ENCODE measurements at regions of chr9 and their contacts with region 1.

Region 1: GRCh38 chr9:98315551-98316060 is 60.2 kb upstream of the TBC1D2 start:
- DNase-seq: peak; percentile 78
- H3K4me3 ChIP-seq: no peak overlapping the region
- H3K27ac ChIP-seq: no peak overlapping the region
- H3K4me1 ChIP-seq: no peaks in the 10 kb centered on the region
- H3K27me3 ChIP-seq: no peaks in the 10 kb centered on the region
- CTCF ChIP-seq: peak; percentile 81 to 87 (median 86)
- EP300 ChIP-seq: no peak
- POLR2A ChIP-seq: no peak

Region 2: GRCh38 chr9:97057651-97058050 is 1258.0 kb before region 1 on chr9:
- in situ Hi-C with region 1: no loop called
- intact Hi-C with region 1: no loop called
- DNase-seq: no peak
- H3K4me3 ChIP-seq: no peak overlapping the region
- H3K27ac ChIP-seq: no peak overlapping the region
- H3K4me1 ChIP-seq: no peaks in the 10 kb centered on the region
- H3K27me3 ChIP-seq: peaks cover 21% of the 10 kb centered on the region
- CTCF ChIP-seq: no peak
- EP300 ChIP-seq: no peak
- POLR2A ChIP-seq: no peak

Region 3: DNA sequence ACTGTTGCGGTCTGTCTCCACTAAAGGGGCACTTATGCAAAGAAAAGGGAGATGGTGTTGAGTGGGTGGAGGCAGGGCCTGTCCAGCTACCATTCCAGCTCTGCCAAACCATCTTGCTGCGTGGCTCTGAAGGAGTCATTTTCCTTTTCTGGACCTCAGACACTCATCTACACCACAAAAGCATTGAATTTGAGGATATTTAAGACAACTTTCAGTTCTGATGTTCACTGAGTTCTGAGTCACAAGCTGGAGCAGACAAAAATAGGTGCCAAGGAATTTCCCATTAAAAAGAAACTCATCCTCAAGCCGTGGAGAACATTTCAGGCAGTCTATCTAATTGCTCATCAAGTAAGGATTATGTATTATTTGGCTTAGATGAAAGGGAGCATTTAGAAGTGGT is 134.9 kb after region 1 on chr9:
- in situ Hi-C with region 1: no loop called
- intact Hi-C with region 1: no loop called
- DNase-seq: no peak
- H3K4me3 ChIP-seq: no peak overlapping the region
- H3K27ac ChIP-seq: no peak overlapping the region
- H3K4me1 ChIP-seq: no peaks in the 10 kb centered on the region
- H3K27me3 ChIP-seq: no peaks in the 10 kb centered on the region
- CTCF ChIP-seq: no peak
- EP300 ChIP-seq: no peak
- POLR2A ChIP-seq: no peak

Region 4: GRCh38 chr9:98678242-98678842 is 362.7 kb after region 1 on chr9:
- in situ Hi-C with region 1: loop called in 1 of 4 experiments (anchors 25 kb)
- intact Hi-C with region 1: no loop called
- DNase-seq: peak; percentile 11
- H3K4me3 ChIP-seq: no peak overlapping the region
- H3K27ac ChIP-seq: no peak overlapping the region
- H3K4me1 ChIP-seq: no peaks in the 10 kb centered on the region
- H3K27me3 ChIP-seq: no peaks in the 10 kb centered on the region
- CTCF ChIP-seq: peak in 4 of 5 experiments; percentile 13 to 43 (median 27)
- EP300 ChIP-seq: no peak
- POLR2A ChIP-seq: no peak

Region 5: GRCh38 chr9:98775831-98776441 is 460.3 kb after region 1 on chr9:
- in situ Hi-C with region 1: loop called (anchors 10 to 25 kb)
- intact Hi-C with region 1: loop called (anchors 10 kb)
- DNase-seq: no peak
- H3K4me3 ChIP-seq: no peak overlapping the region
- H3K27ac ChIP-seq: no peak overlapping the region
- H3K4me1 ChIP-seq: no peaks in the 10 kb centered on the region
- H3K27me3 ChIP-seq: no peaks in the 10 kb centered on the region
- CTCF ChIP-seq: peak; percentile 32 to 56 (median 50)
- EP300 ChIP-seq: no peak
- POLR2A ChIP-seq: no peak

Region 6: GRCh38 chr9:98796364-98797101 is 480.9 kb after region 1 on chr9 and contains the start of gene ANKS6:
- in situ Hi-C with region 1: loop called in 1 of 4 experiments (anchors 25 kb)
- intact Hi-C with region 1: no loop called
- DNase-seq: peak; percentile 89
- H3K4me3 ChIP-seq: peak within 1 kb of the TSS; percentile 68 to 72 (median 68)
- H3K27ac ChIP-seq: peak within 1 kb of the TSS; percentile 76 to 91 (median 86)
- H3K4me1 ChIP-seq: peaks cover 0 to 19% (median 11%) of the 10 kb centered on the region in 4 donors
- H3K27me3 ChIP-seq: no peaks in the 10 kb centered on the region
- CTCF ChIP-seq: peak in 3 of 5 experiments; percentile 37 to 53 (median 44)
- EP300 ChIP-seq: no peak
- POLR2A ChIP-seq: no peak
- total RNA-seq, gene ANKS6: 18.3 to 35.9 (median 29.3) TPM